Activated B cell treated with CpG ODN at 0.5 μM for 24 hours (primary cell): ENCODE measurements at regions of chr7 and their contacts with region 1.

Region 1: DNA sequence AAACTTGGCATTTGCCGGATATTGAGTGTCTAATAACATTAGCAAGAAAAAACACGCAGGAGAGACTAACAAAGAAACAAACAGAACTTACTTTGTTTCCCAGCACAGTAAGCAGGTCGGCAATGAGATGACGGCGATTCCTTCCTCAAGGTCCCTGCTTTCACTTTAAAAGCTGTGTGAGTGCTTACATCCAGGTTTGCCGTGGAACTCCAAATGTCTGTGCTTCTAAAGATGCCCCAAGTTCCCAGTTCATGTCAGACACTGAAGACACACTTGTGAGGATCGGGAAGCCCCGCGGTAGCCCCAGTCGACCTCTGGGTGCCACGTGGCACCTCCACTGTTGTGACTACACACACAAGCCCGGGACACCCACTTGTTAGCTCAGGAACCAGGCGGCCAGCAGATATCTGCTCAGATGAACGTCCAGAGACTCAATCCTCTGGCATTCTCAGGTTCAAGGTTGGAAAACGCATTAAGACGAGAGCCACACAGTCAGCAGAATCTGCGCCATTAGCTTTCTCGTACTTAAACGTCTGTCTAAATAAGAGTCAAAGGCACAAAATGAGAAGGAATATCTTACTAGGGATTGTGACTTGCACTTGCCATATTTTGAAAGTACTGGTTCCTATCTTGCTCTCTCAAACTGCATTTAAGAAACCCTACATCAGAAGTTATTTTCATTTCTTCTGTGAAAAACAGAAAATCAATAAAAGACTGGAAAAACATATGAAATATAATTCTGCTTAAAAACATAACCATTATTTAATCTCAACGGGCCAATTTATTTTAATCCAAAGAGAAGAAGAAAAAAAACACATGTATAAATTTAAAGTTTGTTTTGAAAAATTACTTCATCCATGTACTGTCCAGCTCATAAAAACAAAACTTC is 207.6 kb upstream of the KLF14 start:
- DNase-seq: no peak
- ATAC-seq: no peak
- H3K4me3 Mint-ChIP-seq: peak overlapping the region; percentile 78
- H3K27ac Mint-ChIP-seq: peak overlapping the region; percentile 84
- H3K4me1 Mint-ChIP-seq: peaks cover 90% of the 10 kb centered on the region
- H3K27me3 Mint-ChIP-seq: no peaks in the 10 kb centered on the region
- CTCF ChIP-seq: no peak

Region 2: DNA sequence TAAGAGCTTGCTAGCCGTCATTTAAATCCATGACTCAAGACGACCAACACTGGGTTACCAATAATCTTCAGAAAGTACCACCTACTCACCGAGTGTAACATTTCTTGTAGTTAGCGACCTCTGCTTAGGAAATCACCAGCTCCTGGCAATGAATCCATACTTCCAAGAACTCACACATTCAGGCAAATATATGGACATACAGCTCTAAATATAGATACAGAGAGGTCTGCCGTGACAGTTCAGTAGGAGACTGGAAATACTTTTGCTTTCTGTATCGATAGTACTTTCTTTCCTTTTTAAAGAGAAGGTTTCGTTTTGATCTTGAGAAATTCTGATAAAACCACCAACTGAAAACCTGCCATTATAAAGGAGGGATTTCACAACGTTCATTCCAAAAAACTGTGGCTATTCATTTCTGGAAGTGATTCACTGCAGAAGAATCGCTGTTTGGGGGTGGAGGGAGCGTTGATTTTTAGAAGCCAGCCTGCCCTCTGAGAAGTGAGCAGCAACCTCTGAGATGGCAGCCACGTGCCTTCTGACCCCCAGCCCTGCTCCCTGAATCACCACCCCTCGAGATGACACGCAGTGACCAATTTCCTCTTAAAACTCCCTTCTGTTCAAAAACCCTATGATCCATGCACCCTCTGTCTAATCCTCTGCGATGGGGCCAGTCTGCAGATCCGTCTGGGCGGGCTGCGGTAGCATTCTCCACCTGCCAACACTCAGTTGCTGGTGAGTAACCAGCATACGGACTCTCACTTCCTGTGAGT is 28.5 kb before region 1 on chr7:
- CTCF ChIA-PET with region 1: no interaction called
- POLR2A ChIA-PET with region 1: interaction called, 11 read pairs
- intact Hi-C with region 1: loop called (anchors 1 kb)
- DNase-seq: peak; percentile 54
- ATAC-seq: peak; percentile 91
- H3K4me3 Mint-ChIP-seq: peak overlapping the region; percentile 87
- H3K27ac Mint-ChIP-seq: peak overlapping the region; percentile 90
- H3K4me1 Mint-ChIP-seq: peaks cover 86% of the 10 kb centered on the region
- H3K27me3 Mint-ChIP-seq: no peaks in the 10 kb centered on the region
- CTCF ChIP-seq: no peak

Region 3: DNA sequence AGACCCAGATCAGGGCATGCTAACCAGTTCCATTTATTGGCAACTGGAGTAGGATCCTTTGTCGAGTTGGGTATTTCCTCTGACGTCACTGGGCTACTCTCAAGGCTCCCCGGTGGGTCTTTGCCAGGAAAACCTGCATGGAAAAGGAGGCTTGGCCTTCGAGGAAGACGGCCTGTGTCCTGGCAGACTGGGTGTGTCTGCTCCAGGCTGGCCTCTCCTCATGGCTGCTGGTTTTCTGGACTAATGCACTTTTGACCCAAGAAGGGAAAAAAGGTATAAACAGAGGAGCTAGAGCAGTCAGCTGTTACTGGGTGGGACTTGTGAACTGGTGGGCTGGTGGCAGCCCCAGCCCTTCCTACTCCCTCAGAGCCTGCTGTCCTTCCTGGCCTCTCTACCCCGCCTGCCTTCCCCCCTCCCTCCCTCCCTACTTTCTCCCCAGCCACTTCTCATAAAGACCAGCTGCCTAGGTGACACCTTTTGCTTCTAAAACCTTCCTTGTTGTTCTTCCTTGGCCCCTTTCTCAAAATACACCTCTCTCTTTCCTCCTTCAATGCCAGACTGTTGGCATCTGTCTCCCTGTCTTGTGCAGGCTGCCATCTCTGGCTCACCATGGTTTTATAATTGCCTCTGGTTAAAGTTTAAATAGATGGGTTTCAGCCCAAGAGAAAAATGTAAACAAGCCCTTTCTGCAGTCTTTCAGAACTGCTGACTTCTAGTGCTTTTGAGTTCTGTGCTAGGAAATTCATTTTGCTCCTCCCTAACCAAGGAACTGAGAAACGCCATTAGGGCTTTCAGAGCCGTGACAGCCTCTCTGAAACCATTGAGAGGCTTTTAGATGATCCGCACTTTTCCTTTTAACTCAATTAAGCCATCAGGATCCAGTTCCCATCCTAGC is 284.3 kb after region 1 on chr7:
- CTCF ChIA-PET with region 1: no interaction called
- POLR2A ChIA-PET with region 1: no interaction called
- intact Hi-C with region 1: no loop called
- DNase-seq: no peak
- ATAC-seq: no peak
- H3K4me3 Mint-ChIP-seq: no peak overlapping the region
- H3K27ac Mint-ChIP-seq: no peak overlapping the region
- H3K4me1 Mint-ChIP-seq: peaks cover 7% of the 10 kb centered on the region
- H3K27me3 Mint-ChIP-seq: no peaks in the 10 kb centered on the region
- CTCF ChIP-seq: no peak